ENCODE measurements at regions of chr3 and their contacts with region 1.

Region 1: GRCh38 chr3:59575113-59576001 is 525.5 kb upstream of the CFAP20DC start:
- DNase-seq: peak; percentile 81 to 85
- H3K4me3 ChIP-seq: no peak overlapping the region
- H3K4me3 Mint-ChIP-seq: no peak overlapping the region
- H3K27ac Mint-ChIP-seq: no peak overlapping the region
- H3K4me1 ChIP-seq: no peaks in the 10 kb centered on the region
- H3K4me1 Mint-ChIP-seq: no peaks in the 10 kb centered on the region
- H3K27me3 ChIP-seq: no peaks in the 10 kb centered on the region; the same call in 1 of the 2 replicates
- H3K27me3 Mint-ChIP-seq: peaks cover 16% of the 10 kb centered on the region
- CTCF ChIP-seq: peak; percentile 90 to 92

Region 2: GRCh38 chr3:59212128-59212779 is 363.1 kb before region 1 on chr3:
- CTCF ChIA-PET with region 1: no interaction called
- POLR2A ChIA-PET with region 1: no interaction called
- intact Hi-C with region 1: loop called (anchors 5 kb)
- DNase-seq: peak in 1 of 2 experiments; percentile 35
- H3K4me3 ChIP-seq: no peak overlapping the region
- H3K4me3 Mint-ChIP-seq: no peak overlapping the region
- H3K27ac Mint-ChIP-seq: no peak overlapping the region
- H3K4me1 ChIP-seq: no peaks in the 10 kb centered on the region
- H3K4me1 Mint-ChIP-seq: no peaks in the 10 kb centered on the region
- H3K27me3 ChIP-seq: no peaks in the 10 kb centered on the region
- H3K27me3 Mint-ChIP-seq: peaks cover 6% of the 10 kb centered on the region
- CTCF ChIP-seq: peak; percentile 46 to 61

Region 3: DNA sequence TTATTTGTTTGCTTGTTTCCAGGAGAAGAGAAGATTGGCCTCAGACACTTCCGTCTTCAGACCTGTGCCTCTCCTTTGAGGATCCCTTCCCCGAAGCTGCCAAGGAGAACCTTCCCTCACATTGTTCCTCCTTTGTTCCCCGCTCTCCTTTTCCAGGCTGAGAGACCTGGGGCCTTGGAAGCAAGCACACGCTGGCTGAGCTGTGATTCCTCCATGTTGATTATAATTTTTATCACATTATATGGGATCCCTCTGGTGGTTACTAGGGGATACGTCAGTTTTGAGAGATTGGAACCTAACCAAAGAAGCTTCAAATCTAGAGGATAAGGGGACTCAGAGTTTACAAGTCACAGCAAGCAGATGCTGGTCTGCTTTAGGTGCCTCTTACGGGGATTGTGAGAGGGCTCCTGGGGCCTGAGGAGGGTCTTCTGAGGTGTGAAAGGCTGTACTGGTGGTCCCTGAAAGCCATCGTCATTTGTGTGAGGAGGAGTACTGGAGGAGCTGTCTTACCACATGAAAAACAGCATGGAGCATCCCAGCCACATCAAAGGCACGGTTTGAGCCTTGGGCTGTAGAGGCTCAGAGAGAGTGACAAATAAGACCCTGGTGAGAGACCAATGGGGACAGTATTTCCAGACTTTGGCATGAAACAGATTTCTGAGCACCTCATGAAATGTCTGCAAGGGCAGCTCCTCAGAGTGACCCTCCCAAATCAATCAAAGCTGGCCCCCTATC is 234.5 kb after region 1 on chr3:
- CTCF ChIA-PET with region 1: interaction called, 13 read pairs
- POLR2A ChIA-PET with region 1: no interaction called
- intact Hi-C with region 1: loop called (anchors 1 kb)
- DNase-seq: no peak
- H3K4me3 ChIP-seq: no peak overlapping the region
- H3K4me3 Mint-ChIP-seq: no peak overlapping the region
- H3K27ac Mint-ChIP-seq: no peak overlapping the region
- H3K4me1 ChIP-seq: no peaks in the 10 kb centered on the region
- H3K4me1 Mint-ChIP-seq: peaks cover 7% of the 10 kb centered on the region
- H3K27me3 ChIP-seq: no peaks in the 10 kb centered on the region; the same call in 1 of the 2 replicates
- H3K27me3 Mint-ChIP-seq: no peaks in the 10 kb centered on the region
- CTCF ChIP-seq: peak in 1 of 2 experiments; percentile 22